ENCODE measurements at regions of chr9 and their contacts with region 1.

Region 1: DNA sequence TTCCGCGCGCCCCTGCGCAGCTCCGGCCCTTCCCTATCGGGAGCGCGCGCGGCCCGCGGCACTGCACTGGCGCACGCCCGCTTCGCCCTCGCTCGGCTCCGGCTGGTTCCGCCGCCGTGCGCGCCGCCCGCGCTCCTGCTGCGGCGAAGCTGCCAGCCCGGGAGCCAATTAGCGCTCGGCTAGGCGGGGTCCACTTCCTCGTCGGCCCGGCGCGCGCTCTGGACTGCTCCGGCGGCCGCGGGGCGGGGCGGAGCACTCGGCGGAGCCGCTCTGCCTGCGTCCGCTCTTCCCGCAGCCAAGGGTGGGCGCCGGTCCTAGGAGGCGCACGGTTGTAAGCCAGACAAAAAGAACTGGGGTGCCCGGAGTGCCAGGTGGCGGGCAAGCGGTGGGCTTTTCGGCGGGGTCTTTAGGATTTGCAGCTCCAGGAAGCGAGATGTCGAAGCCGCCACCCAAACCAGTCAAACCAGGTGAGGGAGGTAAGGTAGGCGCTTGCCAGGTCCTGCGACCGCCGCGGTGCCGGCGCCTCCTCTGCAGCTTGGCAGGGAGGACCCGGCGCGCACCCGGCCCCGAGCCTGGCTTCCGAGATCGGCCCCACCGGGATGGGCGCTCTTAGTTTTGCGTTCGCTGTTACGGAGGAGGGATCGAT is at the start of gene OSTF1:
- DNase-seq: peak; percentile 99
- H3K4me3 Mint-ChIP-seq: peak within 1 kb of the TSS; percentile 94
- H3K27ac Mint-ChIP-seq: peak within 1 kb of the TSS; percentile 96
- H3K4me1 Mint-ChIP-seq: peaks cover 56% of the 10 kb centered on the region
- H3K27me3 Mint-ChIP-seq: no peaks in the 10 kb centered on the region
- total RNA-seq, gene OSTF1: 41.5 and 42.4 TPM in 2 replicates

Region 2: GRCh38 chr9:73132034-73132776 is 1956.2 kb before region 1 on chr9:
- intact Hi-C with region 1: loop called (anchors 5 kb)
- DNase-seq: peak; percentile 93
- H3K4me3 Mint-ChIP-seq: peak overlapping the region; percentile 82
- H3K27ac Mint-ChIP-seq: peak overlapping the region; percentile 91
- H3K4me1 Mint-ChIP-seq: peaks cover 40% of the 10 kb centered on the region
- H3K27me3 Mint-ChIP-seq: no peaks in the 10 kb centered on the region

Region 3: DNA sequence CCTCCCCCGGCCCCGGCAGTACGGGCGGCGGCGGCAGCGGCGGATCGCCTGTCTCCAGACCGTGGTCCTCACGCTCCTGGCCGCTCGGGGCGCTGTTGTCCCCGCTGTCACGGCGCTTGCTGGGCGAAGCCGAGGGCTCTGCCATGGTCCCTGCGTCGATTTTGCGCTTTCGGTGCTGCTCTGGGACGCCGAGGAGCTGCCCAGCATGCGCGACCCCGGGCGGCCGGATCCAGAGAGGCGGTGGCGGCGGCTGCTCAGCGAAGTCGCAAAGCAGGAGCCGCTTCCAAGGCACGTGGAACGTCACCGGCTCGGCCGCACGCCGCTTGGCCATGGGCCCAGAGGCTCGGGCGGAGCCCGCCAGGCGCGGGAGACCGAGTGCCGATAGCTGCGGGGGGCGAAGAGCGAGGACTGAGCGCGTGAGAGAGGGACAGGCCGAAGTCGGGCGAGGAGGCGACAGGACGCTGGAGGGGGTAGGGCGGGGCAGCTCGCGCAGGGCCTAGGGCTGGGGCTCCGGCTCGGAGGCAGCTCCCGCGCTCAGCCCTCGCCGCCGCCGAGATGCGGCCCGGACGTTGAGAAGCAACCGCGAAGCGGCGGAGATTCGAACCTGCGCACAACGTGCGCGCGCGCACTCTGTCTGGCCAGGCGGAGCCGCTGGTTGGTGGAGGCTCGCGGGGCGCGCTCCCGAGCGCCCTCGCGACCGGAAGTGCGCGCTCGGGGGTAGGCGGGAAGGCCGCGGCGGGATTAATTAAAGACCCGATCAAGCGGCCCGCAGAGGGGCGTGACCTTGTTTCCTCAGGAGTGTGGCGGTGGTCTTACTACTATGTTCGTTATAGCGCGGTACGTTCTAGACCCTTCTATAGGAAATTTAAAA is 135.9 kb before region 1 on chr9 and contains the start of gene C9orf40:
- intact Hi-C with region 1: loop called (anchors 1 kb)
- DNase-seq: peak; percentile 97
- H3K4me3 Mint-ChIP-seq: peak within 1 kb of the TSS; percentile 98
- H3K27ac Mint-ChIP-seq: peak within 1 kb of the TSS; percentile 97
- H3K4me1 Mint-ChIP-seq: peaks cover 39% of the 10 kb centered on the region
- H3K27me3 Mint-ChIP-seq: no peaks in the 10 kb centered on the region
- total RNA-seq, gene C9orf40: 19.6 and 20.0 TPM in 2 replicates

Region 4: GRCh38 chr9:75071530-75072124 is 16.8 kb before region 1 on chr9:
- intact Hi-C with region 1: loop called (anchors 2 kb)
- DNase-seq: peak; percentile 79
- H3K4me3 Mint-ChIP-seq: no peak overlapping the region
- H3K27ac Mint-ChIP-seq: peak overlapping the region; percentile 12
- H3K4me1 Mint-ChIP-seq: peaks cover 20% of the 10 kb centered on the region
- H3K27me3 Mint-ChIP-seq: no peaks in the 10 kb centered on the region

Region 5: DNA sequence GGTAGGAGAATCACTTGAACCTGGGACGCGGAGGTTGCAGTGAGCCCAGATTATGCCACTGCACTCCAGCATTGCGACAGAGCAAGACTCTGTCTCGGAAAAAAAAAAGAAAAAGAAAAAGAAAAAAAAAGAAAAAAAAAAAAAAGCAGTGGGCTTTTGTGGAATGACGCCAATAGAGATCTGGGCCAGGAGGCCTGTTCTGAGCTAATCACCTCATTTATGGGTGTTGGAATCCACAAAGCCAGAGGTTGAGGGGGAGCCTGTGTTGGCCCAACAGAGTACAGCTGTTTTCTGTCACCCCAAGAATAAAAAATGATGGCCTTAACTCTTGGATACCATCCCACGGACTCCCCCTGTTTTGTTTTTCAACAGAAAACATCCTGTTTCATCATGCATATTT is 18.5 kb after region 1 on chr9:
- intact Hi-C with region 1: no loop called
- DNase-seq: no peak
- H3K4me3 Mint-ChIP-seq: no peak overlapping the region
- H3K27ac Mint-ChIP-seq: no peak overlapping the region
- H3K4me1 Mint-ChIP-seq: peaks cover 31% of the 10 kb centered on the region
- H3K27me3 Mint-ChIP-seq: no peaks in the 10 kb centered on the region

Region 6: DNA sequence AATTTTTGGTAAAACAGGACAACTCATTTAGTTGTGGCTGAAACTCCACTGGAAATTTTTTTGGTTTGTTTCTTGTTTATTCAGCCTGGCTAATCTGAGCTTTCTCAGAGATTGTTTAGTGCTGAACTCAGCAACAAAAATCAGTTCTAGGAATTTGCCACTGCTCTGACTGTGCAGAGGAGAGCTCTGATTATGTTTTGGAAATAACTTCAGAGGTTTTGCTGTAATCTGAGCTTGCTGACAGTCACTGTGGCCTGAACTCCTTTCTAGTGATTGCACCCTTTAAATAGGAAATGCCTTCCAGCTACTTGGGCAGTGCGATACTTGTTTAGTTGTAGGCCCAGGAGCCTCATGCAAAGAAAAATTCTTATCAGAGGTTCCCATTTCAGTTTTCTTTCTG is 60.2 kb after region 1 on chr9:
- intact Hi-C with region 1: loop called (anchors 1 kb)
- DNase-seq: peak; percentile 80
- H3K4me3 Mint-ChIP-seq: peak overlapping the region; percentile 62
- H3K27ac Mint-ChIP-seq: peak overlapping the region; percentile 85
- H3K4me1 Mint-ChIP-seq: peaks cover 63% of the 10 kb centered on the region
- H3K27me3 Mint-ChIP-seq: no peaks in the 10 kb centered on the region

Region 7: GRCh38 chr9:75890472-75891276 is 802.3 kb after region 1 on chr9 and contains the start of gene PCSK5:
- intact Hi-C with region 1: loop called (anchors 5 kb)
- DNase-seq: peak; percentile 95
- H3K4me3 Mint-ChIP-seq: peak within 1 kb of the TSS; percentile 94
- H3K27ac Mint-ChIP-seq: peak within 1 kb of the TSS; percentile 74
- H3K4me1 Mint-ChIP-seq: peaks cover 27% of the 10 kb centered on the region
- H3K27me3 Mint-ChIP-seq: peaks cover 46% of the 10 kb centered on the region
- total RNA-seq, gene PCSK5: 1.6 and 1.9 TPM in 2 replicates

Region 8: DNA sequence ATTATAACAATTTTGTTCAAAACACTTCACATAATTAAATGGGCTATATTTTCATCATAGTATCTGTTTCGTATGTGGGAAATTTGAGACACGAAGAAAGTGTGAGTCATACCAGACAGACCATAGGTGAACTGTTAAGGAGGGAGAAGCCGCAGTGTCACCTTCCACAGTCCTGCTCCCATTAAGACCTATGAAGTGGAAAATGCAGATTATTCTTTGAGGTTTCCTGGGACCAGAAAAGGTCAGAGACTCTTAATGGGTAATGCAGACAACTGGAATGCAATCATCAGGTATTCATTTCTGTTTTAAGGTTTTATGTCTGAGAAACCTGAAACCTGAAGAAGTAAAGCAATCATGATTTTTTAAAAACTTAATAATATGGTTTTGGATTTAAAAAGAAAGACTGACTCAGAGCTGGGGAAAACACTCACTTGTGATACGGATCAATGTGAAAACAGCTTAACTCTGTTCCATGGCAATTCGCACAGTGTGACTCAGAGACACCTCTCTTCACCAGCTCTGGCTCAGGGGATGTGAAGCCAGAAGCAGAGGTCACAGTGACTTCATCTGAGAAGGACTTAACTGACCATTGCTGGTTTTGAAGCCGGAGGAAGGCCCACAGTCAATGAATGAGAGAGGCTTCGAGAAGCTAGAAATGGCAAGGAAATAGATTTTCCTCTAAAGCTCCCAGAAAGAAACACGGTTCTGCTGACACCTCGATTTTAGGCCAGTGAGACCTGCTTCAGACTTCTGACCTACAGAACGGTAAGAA is 1353.4 kb after region 1 on chr9:
- intact Hi-C with region 1: loop called (anchors 5 kb)
- DNase-seq: peak; percentile 69
- H3K4me3 Mint-ChIP-seq: peak overlapping the region; percentile 88
- H3K27ac Mint-ChIP-seq: peak overlapping the region; percentile 98
- H3K4me1 Mint-ChIP-seq: peaks cover 50% of the 10 kb centered on the region
- H3K27me3 Mint-ChIP-seq: no peaks in the 10 kb centered on the region

Measured in activated CD4-positive, alpha-beta T cell treated with anti-CD3 and anti-CD28 coated beads, Interleukin-2, amount 10 ng/mL, durations not matched to agents 24 days and 14 days (primary cell).